Lower lobe of right lung (tissue), 2 donors: ENCODE measurements at regions of chr17 and their contacts with region 1.

Region 1: GRCh38 chr17:1783834-1784611 is 22.2 kb downstream of the SERPINF1 start:
- DNase-seq: peak; percentile 86
- ATAC-seq: peak; percentile 84 to 86
- H3K4me3 ChIP-seq: peak overlapping the region; percentile 19
- H3K27ac ChIP-seq: peak overlapping the region; percentile 95
- H3K4me1 ChIP-seq: peaks cover 83% of the 10 kb centered on the region
- H3K27me3 ChIP-seq: no peaks in the 10 kb centered on the region
- CTCF ChIP-seq: peak; percentile 67

Region 2: GRCh38 chr17:1516388-1517161 is 267.4 kb before region 1 on chr17 and contains the start of gene INPP5K:
- intact Hi-C with region 1: no loop called
- DNase-seq: peak; percentile 99
- ATAC-seq: peak; percentile 97 to 98
- H3K4me3 ChIP-seq: peak within 1 kb of the TSS; percentile 99
- H3K27ac ChIP-seq: peak within 1 kb of the TSS; percentile 97
- H3K4me1 ChIP-seq: peaks cover 47% of the 10 kb centered on the region
- H3K27me3 ChIP-seq: no peaks in the 10 kb centered on the region
- CTCF ChIP-seq: no peak
- total RNA-seq, gene INPP5K: 57.9 TPM

Region 3: DNA sequence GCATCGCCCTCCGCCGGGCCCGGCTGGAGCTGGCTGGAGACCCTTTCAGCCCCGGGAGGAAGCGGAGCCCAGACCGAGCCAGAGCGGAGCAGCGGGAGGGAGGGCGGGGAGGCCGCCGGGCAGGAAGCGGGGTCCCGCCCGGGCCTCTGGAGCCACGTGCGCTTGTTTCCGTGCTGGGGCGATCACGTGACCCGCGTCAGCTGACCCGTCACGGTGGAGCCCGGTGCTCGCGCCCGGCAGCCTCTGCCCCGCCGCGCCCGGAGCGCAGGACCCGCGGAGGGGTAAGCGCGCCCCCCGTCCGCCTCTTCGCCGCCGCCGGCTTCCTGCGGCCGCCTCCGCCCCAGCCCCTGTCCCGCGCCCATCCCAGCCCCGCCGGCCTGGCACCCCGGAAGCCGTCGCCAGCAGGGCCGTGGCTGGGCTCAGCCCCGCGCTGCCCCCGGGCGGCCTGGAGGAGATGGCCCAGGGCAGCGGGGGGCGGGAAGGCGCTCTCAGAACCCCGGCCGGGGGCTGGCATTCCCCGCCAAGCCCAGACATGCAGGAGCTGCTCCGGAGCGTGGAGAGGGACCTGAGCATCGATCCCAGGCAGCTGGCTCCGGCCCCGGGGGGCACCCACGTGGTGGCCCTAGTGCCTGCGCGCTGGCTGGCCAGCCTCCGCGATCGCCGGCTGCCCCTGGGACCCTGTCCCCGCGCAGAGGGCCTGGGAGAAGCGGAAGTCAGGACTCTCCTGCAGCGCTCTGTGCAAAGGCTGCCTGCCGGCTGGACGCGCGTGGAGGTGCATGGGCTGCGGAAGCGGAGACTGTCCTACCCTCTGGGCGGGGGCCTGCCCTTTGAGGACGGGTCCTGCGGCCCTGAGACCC is 59.3 kb before region 1 on chr17 and contains the start of gene WDR81:
- intact Hi-C with region 1: loop called (anchors 5 kb)
- DNase-seq: peak; percentile 97
- ATAC-seq: peak; percentile 88 to 91
- H3K4me3 ChIP-seq: peak within 1 kb of the TSS; percentile 80
- H3K27ac ChIP-seq: peak within 1 kb of the TSS; percentile 94
- H3K4me1 ChIP-seq: peaks cover 72% of the 10 kb centered on the region
- H3K27me3 ChIP-seq: no peaks in the 10 kb centered on the region
- CTCF ChIP-seq: no peak
- total RNA-seq, gene WDR81: 49.9 TPM